Gastrocnemius medialis (tissue), 4 donors: ENCODE measurements at regions of chr9 and their contacts with region 1.

Region 1: DNA sequence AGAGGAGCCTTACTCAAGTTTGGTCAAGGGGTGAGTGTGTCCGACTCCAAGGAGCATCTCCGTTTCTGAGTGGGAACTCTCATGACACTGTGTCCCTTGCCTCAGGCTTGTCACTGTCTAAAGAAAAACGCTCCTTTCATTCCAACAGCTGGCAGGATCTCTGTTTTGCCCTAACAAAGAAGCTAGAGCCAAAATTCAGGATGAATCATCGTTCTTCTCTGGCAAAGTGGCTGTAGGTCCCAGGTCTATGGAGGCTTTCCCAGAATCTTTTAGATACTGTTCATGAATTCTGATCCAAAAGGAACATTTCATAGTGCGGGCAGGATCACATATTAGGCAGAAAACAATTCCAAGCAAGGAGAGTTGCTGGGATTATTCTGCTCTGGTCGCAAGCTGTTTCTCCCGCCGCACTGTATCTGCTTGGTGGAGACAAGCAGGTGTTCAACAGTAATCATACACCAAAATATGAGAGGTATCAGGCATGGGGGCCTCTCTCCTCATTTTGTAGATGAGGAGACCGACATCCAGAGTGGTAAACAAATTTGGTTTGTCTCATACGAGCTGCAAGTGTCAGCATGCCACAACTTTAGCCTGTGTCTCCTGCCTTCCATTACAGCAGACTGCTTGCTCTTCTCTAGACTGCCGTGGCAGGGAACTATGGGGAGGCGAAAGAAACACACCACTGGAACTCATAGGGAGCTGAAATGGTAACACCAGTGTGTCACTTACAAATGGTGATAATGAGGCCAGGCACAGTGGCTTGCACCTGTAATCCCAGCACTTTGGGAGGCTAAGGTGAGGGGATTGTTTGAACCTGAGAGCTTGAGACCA is 72.6 kb downstream of the ENTREP1 start:
- DNase-seq: peak; percentile 76 to 78
- ATAC-seq: peak; percentile 93 to 95
- H3K4me3 ChIP-seq: peak overlapping the region; percentile 29 to 42 (median 38)
- H3K27ac ChIP-seq: peak overlapping the region; percentile 80 to 97 (median 88)
- H3K4me1 ChIP-seq: peaks cover 6 to 21% of the 10 kb centered on the region in 2 donors
- H3K27me3 ChIP-seq: no peaks in the 10 kb centered on the region
- CTCF ChIP-seq: no peak
- POLR2A ChIP-seq: no peak

Region 2: GRCh38 chr9:69279084-69279729 is 118.4 kb before region 1 on chr9:
- in situ Hi-C with region 1: no loop called
- intact Hi-C with region 1: loop called (anchors 10 kb)
- DNase-seq: no peak
- ATAC-seq: no peak
- H3K4me3 ChIP-seq: no peak overlapping the region
- H3K27ac ChIP-seq: no peak overlapping the region
- H3K4me1 ChIP-seq: no peaks in the 10 kb centered on the region
- H3K27me3 ChIP-seq: no peaks in the 10 kb centered on the region
- CTCF ChIP-seq: no peak
- POLR2A ChIP-seq: no peak

Region 3: DNA sequence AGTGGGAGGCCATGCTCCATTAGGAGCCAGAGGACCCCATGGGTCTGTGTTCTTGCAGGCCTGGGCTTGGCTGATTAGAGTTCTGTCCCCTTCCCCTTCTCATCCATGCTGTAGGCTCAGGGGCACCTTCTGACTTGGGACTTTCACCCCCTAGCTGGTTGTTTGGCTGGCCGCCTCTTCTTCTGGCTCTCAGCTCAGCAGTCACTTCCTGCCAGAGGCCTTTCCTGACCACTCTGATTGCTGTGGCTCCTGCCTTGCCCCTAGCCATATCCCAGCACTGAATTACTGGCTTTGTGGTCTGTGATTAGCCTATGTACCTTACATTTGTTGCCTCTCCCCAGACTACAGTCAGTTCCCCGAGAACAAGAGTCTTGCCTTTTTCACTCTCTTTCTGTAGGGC is 58.0 kb before region 1 on chr9:
- in situ Hi-C with region 1: loop called in 1 of 4 experiments (anchors 10 kb)
- intact Hi-C with region 1: no loop called
- DNase-seq: no peak
- ATAC-seq: peak in 1 of 2 donors; percentile 22
- H3K4me3 ChIP-seq: no peak overlapping the region
- H3K27ac ChIP-seq: peak overlapping the region; percentile 26 to 69 (median 44)
- H3K4me1 ChIP-seq: peaks cover 34 to 39% of the 10 kb centered on the region in 2 donors
- H3K27me3 ChIP-seq: no peaks in the 10 kb centered on the region
- CTCF ChIP-seq: no peak
- POLR2A ChIP-seq: no peak

Region 4: GRCh38 chr9:69376651-69377050 is 20.9 kb before region 1 on chr9:
- in situ Hi-C with region 1: no loop called
- intact Hi-C with region 1: loop called (anchors 2 kb)
- DNase-seq: peak; percentile 42 to 48
- ATAC-seq: peak; percentile 14 to 16
- H3K4me3 ChIP-seq: no peak overlapping the region
- H3K27ac ChIP-seq: peak overlapping the region; percentile 90 to 98 (median 96)
- H3K4me1 ChIP-seq: peaks cover 51 to 56% of the 10 kb centered on the region in 2 donors
- H3K27me3 ChIP-seq: no peaks in the 10 kb centered on the region
- CTCF ChIP-seq: no peak
- POLR2A ChIP-seq: peak in 1 of 2 donors; percentile 31

Region 5: GRCh38 chr9:69485470-69485869 is 87.9 kb after region 1 on chr9:
- in situ Hi-C with region 1: no loop called
- intact Hi-C with region 1: no loop called
- DNase-seq: no peak
- ATAC-seq: no peak
- H3K4me3 ChIP-seq: no peak overlapping the region
- H3K27ac ChIP-seq: no peak overlapping the region
- H3K4me1 ChIP-seq: peaks cover 10 to 11% of the 10 kb centered on the region in 2 donors
- H3K27me3 ChIP-seq: no peaks in the 10 kb centered on the region
- CTCF ChIP-seq: no peak
- POLR2A ChIP-seq: no peak

Region 6: GRCh38 chr9:69564557-69564956 is 167.0 kb after region 1 on chr9:
- in situ Hi-C with region 1: no loop called
- intact Hi-C with region 1: no loop called
- DNase-seq: no peak
- ATAC-seq: no peak
- H3K4me3 ChIP-seq: no peak overlapping the region
- H3K27ac ChIP-seq: no peak overlapping the region
- H3K4me1 ChIP-seq: peaks cover 4 to 16% of the 10 kb centered on the region in 2 donors
- H3K27me3 ChIP-seq: no peaks in the 10 kb centered on the region
- CTCF ChIP-seq: no peak
- POLR2A ChIP-seq: no peak